Psoas muscle (tissue), 8 donors: ENCODE measurements at regions of chr7 and their contacts with region 1.

Region 1: DNA sequence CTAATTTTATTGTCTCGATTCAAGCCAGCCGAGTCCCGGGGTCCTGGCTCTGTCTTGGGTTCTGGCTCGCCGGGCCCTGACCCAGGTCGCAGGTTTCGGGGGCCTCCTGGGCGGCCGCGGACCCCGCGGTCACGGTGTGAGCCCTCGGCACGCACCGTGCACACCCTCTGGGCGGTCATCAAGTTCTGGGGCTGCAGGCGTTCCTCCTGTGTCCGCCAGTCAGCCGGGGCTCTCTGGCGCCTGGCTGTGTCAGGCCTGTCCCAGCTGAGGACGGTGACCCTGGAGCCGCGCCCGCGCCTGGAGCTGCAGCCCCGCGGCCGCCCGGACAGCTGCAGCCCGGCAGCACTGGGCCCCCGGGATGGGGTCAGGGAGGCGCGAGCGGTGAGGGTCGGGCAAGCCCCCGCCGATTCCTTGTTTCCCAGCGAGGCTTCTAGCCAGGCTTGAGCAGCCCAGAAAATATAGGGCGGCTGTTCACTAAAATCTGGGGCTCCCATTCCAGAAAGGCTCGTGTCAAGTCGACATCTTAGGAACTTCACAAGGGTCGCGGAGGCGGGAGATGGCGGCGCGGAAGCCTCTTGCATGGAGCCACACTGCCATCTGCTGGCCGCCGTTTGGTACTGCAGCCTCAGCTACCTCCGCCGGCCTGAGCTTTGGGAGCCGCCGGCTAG is 4.2 kb upstream of the HOXA7 start:
- DNase-seq: peak; percentile 83 to 93
- ATAC-seq: peak; percentile 64 to 77 (median 70)
- H3K4me3 ChIP-seq: peak overlapping the region; percentile 79
- H3K27ac ChIP-seq: peak overlapping the region; percentile 86
- H3K4me1 ChIP-seq: peaks cover 19% of the 10 kb centered on the region
- H3K27me3 ChIP-seq: no peaks in the 10 kb centered on the region
- CTCF ChIP-seq: peak; percentile 100

Region 2: GRCh38 chr7:25857376-25857921 is 1303.2 kb before region 1 on chr7:
- intact Hi-C with region 1: loop called in 1 of 2 experiments (anchors 2 kb)
- DNase-seq: peak; percentile 23 to 82
- ATAC-seq: peak; percentile 18 to 47 (median 36)
- H3K4me3 ChIP-seq: peak overlapping the region; percentile 68
- H3K27ac ChIP-seq: peak overlapping the region; percentile 97
- H3K4me1 ChIP-seq: peaks cover 11% of the 10 kb centered on the region
- H3K27me3 ChIP-seq: peaks cover 0 to 27% (median 6%) of the 10 kb centered on the region in 3 donors
- CTCF ChIP-seq: no peak

Region 3: GRCh38 chr7:26200444-26201246 is 960.0 kb before region 1 on chr7 and contains the start of gene HNRNPA2B1:
- intact Hi-C with region 1: loop called (anchors 5 to 10 kb)
- DNase-seq: peak; percentile 94 to 98
- ATAC-seq: peak; percentile 80 to 85 (median 84)
- H3K4me3 ChIP-seq: peak within 1 kb of the TSS; percentile 90
- H3K27ac ChIP-seq: peak within 1 kb of the TSS; percentile 97
- H3K4me1 ChIP-seq: peaks cover 38% of the 10 kb centered on the region
- H3K27me3 ChIP-seq: no peaks in the 10 kb centered on the region
- CTCF ChIP-seq: peak; percentile 7
- total RNA-seq, gene HNRNPA2B1: 323 to 482 (median 452) TPM

Region 4: DNA sequence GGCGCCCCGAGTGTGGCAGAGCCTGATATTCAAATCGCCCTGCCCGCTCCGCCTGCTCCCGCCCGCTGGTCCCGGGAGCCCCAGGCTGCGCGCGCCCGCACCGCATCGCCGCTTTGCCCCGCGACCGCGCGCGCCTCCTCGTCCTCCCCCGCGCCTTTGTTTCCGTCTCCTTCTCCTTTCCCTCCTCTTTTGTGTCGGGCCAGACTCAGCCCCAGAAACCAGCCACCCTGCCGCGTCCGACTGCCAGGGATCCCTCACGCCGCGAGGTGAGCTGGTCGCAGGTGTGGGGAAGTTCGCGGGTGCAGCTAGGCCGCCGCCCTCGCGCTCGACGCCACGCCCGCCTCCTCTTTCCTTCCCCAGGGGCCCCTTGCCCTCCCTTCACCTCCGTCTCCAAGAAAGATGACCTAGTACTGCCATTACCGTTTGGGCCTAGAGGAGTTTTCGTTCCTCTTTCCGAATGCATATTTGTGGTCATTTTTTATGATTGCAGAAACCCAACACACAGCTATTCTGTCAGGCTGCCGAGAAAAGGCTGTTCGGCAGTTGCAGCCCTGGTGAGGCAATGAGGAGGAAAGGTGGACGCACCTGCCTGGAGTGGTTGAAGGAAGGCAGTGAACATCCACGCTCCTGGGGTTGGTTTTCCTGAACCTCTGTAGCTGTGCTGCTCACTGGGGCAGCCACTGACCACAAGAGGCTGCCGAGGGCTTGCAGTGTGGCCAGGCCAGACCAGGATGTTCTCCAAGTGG is 761.8 kb before region 1 on chr7:
- intact Hi-C with region 1: loop called in 1 of 2 experiments (anchors 5 kb)
- DNase-seq: peak; percentile 61 to 67
- ATAC-seq: peak; percentile 60 to 70 (median 63)
- H3K4me3 ChIP-seq: peak overlapping the region; percentile 89
- H3K27ac ChIP-seq: peak overlapping the region; percentile 99
- H3K4me1 ChIP-seq: peaks cover 12% of the 10 kb centered on the region
- H3K27me3 ChIP-seq: no peaks in the 10 kb centered on the region
- CTCF ChIP-seq: peak; percentile 33

Region 5: GRCh38 chr7:26694141-26694540 is 466.5 kb before region 1 on chr7:
- intact Hi-C with region 1: no loop called
- DNase-seq: no peak
- ATAC-seq: no peak
- H3K4me3 ChIP-seq: no peak overlapping the region
- H3K27ac ChIP-seq: no peak overlapping the region
- H3K4me1 ChIP-seq: no peaks in the 10 kb centered on the region
- H3K27me3 ChIP-seq: no peaks in the 10 kb centered on the region
- CTCF ChIP-seq: no peak

Region 6: GRCh38 chr7:26853788-26854393 is 306.8 kb before region 1 on chr7:
- intact Hi-C with region 1: loop called in 1 of 2 experiments (anchors 2 kb)
- DNase-seq: no peak
- ATAC-seq: peak; percentile 51 to 85 (median 68)
- H3K4me3 ChIP-seq: no peak overlapping the region
- H3K27ac ChIP-seq: peak overlapping the region; percentile 10
- H3K4me1 ChIP-seq: peaks cover 5% of the 10 kb centered on the region
- H3K27me3 ChIP-seq: peaks cover 5 to 11% (median 10%) of the 10 kb centered on the region in 3 donors
- CTCF ChIP-seq: peak; percentile 62